Caco-2 (cell line): ENCODE measurements at regions of chr7 and their contacts with region 1.

Region 1: DNA sequence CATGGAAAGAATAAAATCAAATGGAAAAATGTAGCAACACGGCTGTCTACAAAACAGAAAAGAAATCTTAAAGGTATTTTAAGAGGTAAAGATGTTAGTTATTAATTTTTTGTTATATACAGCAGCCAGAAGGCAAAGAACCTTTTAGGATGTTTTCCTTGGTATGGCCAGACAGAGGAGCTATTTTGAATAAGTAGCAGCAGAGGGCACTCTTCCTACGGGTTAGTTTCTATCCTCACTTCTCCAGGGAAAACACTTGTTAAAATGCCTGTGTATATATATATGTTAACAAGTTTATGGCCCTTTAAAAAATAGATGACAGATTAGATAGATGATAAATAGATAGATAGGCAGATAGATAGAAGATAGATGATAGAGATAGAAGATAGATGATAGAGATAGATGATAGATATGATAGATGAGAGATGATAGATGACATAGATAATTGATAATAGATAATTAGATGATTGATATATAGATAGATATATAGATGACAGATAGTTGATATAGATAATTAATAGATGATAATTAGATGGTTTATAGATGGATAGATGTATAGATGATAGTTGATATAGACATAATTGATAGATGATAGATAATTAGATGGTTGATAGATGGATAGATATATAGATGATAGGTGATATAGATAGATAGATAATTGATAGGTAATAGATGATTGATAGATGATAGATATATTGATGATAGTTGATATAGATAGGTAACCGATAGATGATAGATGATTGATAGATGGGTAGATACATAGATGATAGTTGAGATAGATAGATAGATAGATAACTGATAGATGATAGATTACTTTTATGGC is 57.8 kb upstream of the WIPF3 start:
- DNase-seq: peak in 1 of 2 experiments; percentile 29
- H3K4me3 ChIP-seq: no peak overlapping the region
- H3K4me3 Mint-ChIP-seq: no peak overlapping the region
- H3K27ac Mint-ChIP-seq: no peak overlapping the region
- H3K4me1 ChIP-seq: no peaks in the 10 kb centered on the region
- H3K4me1 Mint-ChIP-seq: peaks cover 7% of the 10 kb centered on the region
- H3K27me3 ChIP-seq: no peaks in the 10 kb centered on the region; the same call in 1 of the 2 replicates
- H3K27me3 Mint-ChIP-seq: peaks cover 20% of the 10 kb centered on the region
- CTCF ChIP-seq: peak; percentile 62 to 64

Region 2: GRCh38 chr7:29639881-29640595 is 108.5 kb before region 1 on chr7:
- CTCF ChIA-PET with region 1: interaction called, 5 read pairs
- POLR2A ChIA-PET with region 1: no interaction called
- intact Hi-C with region 1: loop called (anchors 1 kb)
- DNase-seq: no peak
- H3K4me3 ChIP-seq: no peak overlapping the region
- H3K4me3 Mint-ChIP-seq: no peak overlapping the region
- H3K27ac Mint-ChIP-seq: no peak overlapping the region
- H3K4me1 ChIP-seq: no peaks in the 10 kb centered on the region
- H3K4me1 Mint-ChIP-seq: no peaks in the 10 kb centered on the region
- H3K27me3 ChIP-seq: no peaks in the 10 kb centered on the region
- H3K27me3 Mint-ChIP-seq: no peaks in the 10 kb centered on the region
- CTCF ChIP-seq: no peak

Region 3: DNA sequence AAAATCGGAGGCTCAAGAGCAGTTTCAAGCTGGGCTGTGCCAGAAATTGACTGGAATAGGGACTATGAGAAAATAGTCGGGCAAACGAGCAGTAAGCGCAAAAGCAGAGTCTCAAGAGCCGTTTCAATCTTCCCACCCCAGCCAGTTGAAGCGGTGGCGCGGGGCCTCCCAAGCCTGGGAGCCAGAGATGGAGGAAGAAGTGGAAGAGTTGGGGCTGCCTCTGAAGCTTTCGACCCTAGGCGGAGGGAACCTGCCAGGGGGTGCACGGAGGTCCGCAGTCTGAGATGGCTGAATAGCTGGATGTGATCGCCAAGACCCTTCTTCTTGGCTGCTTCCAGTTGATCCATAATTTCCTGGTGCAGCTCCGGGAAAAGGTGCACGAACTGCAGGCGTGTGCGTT is 97.9 kb before region 1 on chr7:
- CTCF ChIA-PET with region 1: no interaction called
- POLR2A ChIA-PET with region 1: no interaction called
- intact Hi-C with region 1: no loop called
- DNase-seq: no peak
- H3K4me3 ChIP-seq: no peak overlapping the region
- H3K4me3 Mint-ChIP-seq: no peak overlapping the region
- H3K27ac Mint-ChIP-seq: no peak overlapping the region
- H3K4me1 ChIP-seq: peaks cover 2% of the 10 kb centered on the region; the same call in 1 of the 2 replicates
- H3K4me1 Mint-ChIP-seq: peaks cover 18% of the 10 kb centered on the region
- H3K27me3 ChIP-seq: no peaks in the 10 kb centered on the region
- H3K27me3 Mint-ChIP-seq: no peaks in the 10 kb centered on the region
- CTCF ChIP-seq: no peak

Region 4: DNA sequence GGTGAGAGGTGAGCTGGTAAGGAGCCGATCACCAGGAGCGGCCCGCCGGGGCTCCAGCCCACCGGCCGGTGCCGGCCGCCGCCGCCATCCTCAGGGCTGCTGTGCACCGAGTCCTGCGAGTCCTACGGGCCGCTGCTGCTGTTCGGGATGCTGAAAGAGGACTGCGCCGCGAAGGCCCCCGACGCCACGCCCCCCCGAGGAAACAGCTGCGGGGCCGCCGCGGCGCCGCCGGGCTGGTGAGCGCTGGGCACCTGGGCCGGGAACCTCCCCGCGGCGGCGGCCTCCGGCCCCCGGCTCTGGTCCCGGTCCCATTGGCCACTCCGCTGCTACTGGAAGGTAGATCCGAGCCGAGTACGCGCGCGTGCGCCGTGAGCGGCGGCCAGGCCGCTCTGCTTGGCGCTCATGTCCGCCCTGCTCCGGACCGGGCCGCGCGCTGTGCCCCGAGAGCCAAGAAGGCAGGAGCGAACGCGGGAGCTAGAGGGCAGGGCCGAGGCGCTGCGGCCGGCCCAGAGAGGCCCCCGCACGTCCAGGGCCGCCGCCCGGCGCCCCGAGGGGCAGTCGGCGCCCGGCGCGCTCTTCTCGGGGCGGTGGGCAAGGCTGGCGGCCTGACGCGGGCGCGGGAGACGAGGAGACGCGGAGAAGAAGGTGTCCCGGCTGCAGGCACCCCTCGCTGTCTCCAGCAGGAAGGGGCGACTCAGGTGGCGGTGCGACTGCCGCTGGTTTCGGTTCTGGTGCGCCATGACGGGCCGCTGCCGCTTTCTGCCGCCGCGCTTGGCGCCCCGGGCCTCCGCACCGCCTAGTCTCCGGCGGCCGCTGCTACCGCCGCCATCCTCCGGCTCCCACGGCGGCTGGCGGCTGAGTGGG is 63.5 kb before region 1 on chr7:
- CTCF ChIA-PET with region 1: no interaction called
- POLR2A ChIA-PET with region 1: no interaction called
- intact Hi-C with region 1: no loop called
- DNase-seq: peak; percentile 85 to 88
- H3K4me3 ChIP-seq: peak overlapping the region; percentile 72
- H3K4me3 Mint-ChIP-seq: peak overlapping the region; percentile 88
- H3K27ac Mint-ChIP-seq: peak overlapping the region; percentile 72
- H3K4me1 ChIP-seq: no peaks in the 10 kb centered on the region
- H3K4me1 Mint-ChIP-seq: no peaks in the 10 kb centered on the region
- H3K27me3 ChIP-seq: no peaks in the 10 kb centered on the region
- H3K27me3 Mint-ChIP-seq: no peaks in the 10 kb centered on the region
- CTCF ChIP-seq: no peak

Region 5: GRCh38 chr7:29780346-29780745 is 31.8 kb after region 1 on chr7:
- CTCF ChIA-PET with region 1: no interaction called
- POLR2A ChIA-PET with region 1: no interaction called
- intact Hi-C with region 1: no loop called
- DNase-seq: no peak
- H3K4me3 ChIP-seq: no peak overlapping the region
- H3K4me3 Mint-ChIP-seq: no peak overlapping the region
- H3K27ac Mint-ChIP-seq: no peak overlapping the region
- H3K4me1 ChIP-seq: no peaks in the 10 kb centered on the region
- H3K4me1 Mint-ChIP-seq: no peaks in the 10 kb centered on the region
- H3K27me3 ChIP-seq: no peaks in the 10 kb centered on the region; the same call in 1 of the 2 replicates
- H3K27me3 Mint-ChIP-seq: peaks cover 11% of the 10 kb centered on the region
- CTCF ChIP-seq: no peak